Naive thymus-derived CD4-positive, alpha-beta T cell (primary cell): ENCODE measurements at regions of chr7 and their contacts with region 1.

Region 1: DNA sequence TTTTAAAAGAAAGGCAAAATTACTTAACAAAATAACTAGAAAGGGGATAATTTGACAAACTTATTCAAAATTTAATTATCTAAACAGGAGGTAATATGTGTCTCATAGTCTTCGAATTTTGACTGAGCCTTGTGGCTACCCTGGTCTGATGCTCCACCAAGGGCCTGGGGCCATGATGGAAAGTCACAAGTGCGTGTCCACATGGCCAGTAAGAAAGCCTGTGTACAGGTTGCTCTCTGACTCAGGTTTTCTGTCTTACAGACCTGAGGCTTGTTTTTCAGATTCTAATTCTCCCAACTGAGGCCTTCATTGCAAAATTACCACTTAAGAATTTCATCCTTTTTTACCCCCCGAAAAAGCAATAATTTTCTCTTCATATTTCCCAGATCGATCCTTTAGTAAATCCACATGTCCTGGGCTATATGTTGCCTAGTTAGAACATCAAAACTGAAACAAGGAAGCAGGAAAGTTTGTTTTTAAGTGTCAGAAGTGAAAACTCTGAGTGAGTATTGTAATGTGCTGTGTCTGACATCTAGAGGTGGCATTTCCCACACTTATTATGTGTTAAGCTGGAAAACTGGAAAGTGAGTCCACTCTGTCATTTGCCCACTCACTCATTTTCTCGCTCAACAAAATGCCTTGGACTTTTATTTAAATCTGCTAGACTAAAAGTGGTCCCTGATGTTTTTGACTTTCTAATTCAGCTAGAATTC is 10.0 kb downstream of the CYP3A43 start:
- DNase-seq: peak in 3 of 9 donors; percentile 2 to 12 (median 7)
- ATAC-seq: peak; percentile 45
- H3K4me3 ChIP-seq: no peak overlapping the region
- H3K4me3 Mint-ChIP-seq: peak overlapping the region in 2 of 10 donors; percentile 27 to 38
- H3K27ac ChIP-seq: no peak overlapping the region
- H3K27ac Mint-ChIP-seq: peak overlapping the region in 7 of 9 donors; percentile 1 to 73 (median 47)
- H3K4me1 ChIP-seq: no peaks in the 10 kb centered on the region
- H3K4me1 Mint-ChIP-seq: peaks cover 0 to 10% (median 6%) of the 10 kb centered on the region in 7 donors
- H3K27me3 ChIP-seq: no peaks in the 10 kb centered on the region
- H3K27me3 Mint-ChIP-seq: peaks cover 0 to 4% (median 2%) of the 10 kb centered on the region in 5 donors

Region 2: DNA sequence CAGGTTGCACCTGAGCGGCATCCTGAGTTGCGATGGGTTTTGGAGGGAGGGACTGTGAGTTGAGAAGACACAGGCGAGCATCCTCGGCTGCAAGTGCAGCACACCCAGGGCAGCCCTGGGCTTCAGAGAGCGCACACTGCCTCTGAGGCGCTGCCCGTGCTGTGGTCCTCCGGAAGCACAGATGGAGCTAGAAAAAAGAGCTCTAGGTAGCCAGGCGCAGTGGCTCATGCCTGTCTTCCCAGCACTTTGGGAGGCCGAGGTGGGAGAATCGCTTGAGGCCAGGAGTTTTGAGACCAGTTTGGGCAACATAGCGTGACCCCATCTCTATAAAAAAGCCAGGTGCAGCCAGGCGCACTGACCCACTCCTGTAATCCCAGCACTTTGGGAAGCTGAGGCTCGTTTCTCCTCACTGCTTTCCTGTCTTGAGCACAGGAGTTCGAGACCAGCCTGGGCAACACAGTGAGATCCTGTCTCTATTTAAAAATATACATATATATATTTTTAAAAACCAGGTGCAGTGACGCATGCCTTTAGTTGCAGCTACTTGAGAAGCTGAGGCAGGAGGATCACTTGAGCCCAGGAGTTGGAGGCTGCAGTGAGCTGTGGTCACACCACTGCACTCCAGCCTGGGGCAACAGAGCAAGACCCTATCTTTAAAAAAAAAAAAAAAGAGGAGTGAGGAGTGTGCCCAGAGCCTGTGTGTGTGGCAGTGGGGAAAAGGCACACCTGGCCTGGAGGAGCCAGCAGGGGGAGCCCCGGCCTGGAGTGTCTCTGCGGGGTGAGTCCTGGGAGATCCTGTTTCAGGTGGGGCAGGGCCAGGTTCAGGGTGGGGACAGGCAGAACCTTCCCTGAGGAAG is 472.6 kb before region 1 on chr7:
- CTCF ChIA-PET with region 1: interaction called, 4 read pairs
- POLR2A ChIA-PET with region 1: no interaction called
- intact Hi-C with region 1: loop called (anchors 5 kb)
- DNase-seq: peak; percentile 49 to 77 (median 64)
- ATAC-seq: peak; percentile 97
- H3K4me3 ChIP-seq: no peak overlapping the region
- H3K4me3 Mint-ChIP-seq: no peak overlapping the region
- H3K27ac ChIP-seq: no peak overlapping the region
- H3K27ac Mint-ChIP-seq: peak overlapping the region in 4 of 9 donors; percentile 19 to 81 (median 22)
- H3K4me1 ChIP-seq: no peaks in the 10 kb centered on the region
- H3K4me1 Mint-ChIP-seq: peaks cover 0 to 10% (median 0%) of the 10 kb centered on the region in 7 donors
- H3K27me3 ChIP-seq: no peaks in the 10 kb centered on the region
- H3K27me3 Mint-ChIP-seq: no peaks in the 10 kb centered on the region